Colonic mucosa (tissue), 4 donors: ENCODE measurements at regions of chr15 and their contacts with region 1.

Region 1: GRCh38 chr15:46676233-46677206 is 1040.8 kb upstream of the SEMA6D start:
- DNase-seq: no peak
- H3K4me3 ChIP-seq: no peak overlapping the region
- H3K27ac ChIP-seq: no peak overlapping the region
- H3K4me1 ChIP-seq: no peaks in the 10 kb centered on the region
- H3K27me3 ChIP-seq: no peaks in the 10 kb centered on the region
- CTCF ChIP-seq: no peak

Region 2: DNA sequence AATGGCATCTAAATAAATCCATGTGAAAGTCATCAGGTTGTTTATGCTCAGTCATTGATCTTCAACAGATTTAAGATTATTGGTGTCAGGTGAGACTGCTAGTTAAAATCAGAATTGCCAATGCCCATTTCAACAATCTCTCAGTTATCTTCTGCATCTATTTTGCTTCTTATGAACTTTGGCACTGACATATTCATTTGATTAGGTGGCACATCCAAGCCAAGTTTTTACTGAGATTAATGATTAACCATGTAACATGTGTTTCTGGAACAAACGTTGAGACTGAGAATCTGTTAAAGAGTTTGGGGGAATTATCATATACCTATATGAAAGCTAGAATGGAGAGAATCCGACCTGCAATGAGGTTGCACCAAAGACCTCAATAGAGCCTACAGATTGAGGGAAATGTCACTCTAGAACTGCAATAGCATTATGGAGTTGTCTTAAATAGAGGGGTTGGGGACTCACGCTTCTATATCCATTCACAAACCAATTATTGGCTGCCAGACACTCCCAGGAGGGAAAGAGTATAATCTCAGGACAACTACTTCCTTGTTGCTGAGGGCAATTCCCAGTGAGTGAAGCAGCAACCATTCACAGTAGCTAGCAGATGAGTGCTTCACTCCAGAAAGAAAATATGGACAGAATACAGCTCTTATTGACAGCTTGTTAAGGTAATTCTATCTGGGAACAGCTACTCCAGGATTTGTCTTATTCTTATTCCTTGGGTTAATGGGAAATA is 150.4 kb before region 1 on chr15:
- intact Hi-C with region 1: loop called (anchors 10 kb)
- DNase-seq: peak; percentile 39
- H3K4me3 ChIP-seq: no peak overlapping the region
- H3K27ac ChIP-seq: peak overlapping the region; percentile 70
- H3K4me1 ChIP-seq: no peaks in the 10 kb centered on the region
- H3K27me3 ChIP-seq: no peaks in the 10 kb centered on the region
- CTCF ChIP-seq: no peak

Region 3: DNA sequence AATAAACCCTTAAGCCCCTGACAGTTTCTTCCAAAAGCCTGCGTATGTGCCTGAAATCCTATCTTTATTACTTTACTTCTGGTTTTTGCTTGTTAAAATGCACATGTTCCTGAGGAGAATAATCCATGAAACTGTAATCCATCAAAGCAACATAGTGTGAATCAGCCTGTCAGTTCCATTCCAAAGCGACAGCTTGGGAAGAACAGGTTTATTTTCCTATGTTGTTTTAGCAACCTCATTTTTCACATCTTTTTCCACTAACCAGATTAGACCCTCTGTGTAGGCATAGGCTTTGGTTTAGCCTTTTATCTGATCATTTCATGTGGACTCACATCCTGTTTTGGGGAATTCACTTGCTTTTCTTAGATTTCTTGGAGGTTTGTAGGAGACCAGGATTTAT is 53.7 kb before region 1 on chr15:
- intact Hi-C with region 1: no loop called
- DNase-seq: no peak
- H3K4me3 ChIP-seq: no peak overlapping the region
- H3K27ac ChIP-seq: no peak overlapping the region
- H3K4me1 ChIP-seq: no peaks in the 10 kb centered on the region
- H3K27me3 ChIP-seq: no peaks in the 10 kb centered on the region
- CTCF ChIP-seq: no peak